GM13977 (cell line): ENCODE measurements at regions of chr4 and their contacts with region 1.

Region 1: GRCh38 chr4:77618383-77619122 is 12.9 kb downstream of the CXCL13 start:
- DNase-seq: peak; percentile 61
- CTCF ChIP-seq: peak; percentile 86

Region 2: DNA sequence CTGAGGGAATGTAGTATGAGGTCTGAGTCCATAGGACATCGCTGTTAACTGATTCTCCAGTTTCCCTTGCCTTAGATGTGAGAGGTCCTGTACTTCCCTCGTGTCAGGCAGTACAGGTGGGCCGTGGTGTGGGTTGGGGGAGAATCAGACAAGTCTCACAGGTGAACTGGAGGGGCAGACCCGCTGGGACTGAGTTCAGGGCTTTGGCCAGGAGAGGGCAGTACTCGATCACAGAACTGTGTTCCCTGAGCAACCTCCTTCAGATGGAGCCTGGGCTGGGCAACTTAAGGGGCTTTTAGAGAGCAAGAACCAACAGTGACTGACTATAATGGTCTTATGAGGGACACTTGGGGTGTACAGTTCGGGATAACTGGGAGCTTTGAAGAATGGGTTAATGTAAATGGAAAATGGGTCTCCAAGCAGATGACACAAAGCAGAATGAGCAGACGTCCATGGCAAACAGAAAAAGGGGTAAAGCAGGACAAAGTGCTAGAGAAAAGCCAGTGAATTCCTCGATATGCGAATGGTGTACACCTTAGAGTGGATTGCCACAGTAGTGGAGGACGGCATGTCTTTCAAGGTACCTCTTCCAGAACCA is 378.0 kb before region 1 on chr4:
- in situ Hi-C with region 1: loop called (anchors 25 kb)
- DNase-seq: peak; percentile 38
- CTCF ChIP-seq: peak; percentile 91

Region 3: GRCh38 chr4:77385124-77385969 is 233.2 kb before region 1 on chr4:
- in situ Hi-C with region 1: loop called (anchors 25 kb)
- DNase-seq: peak; percentile 38
- CTCF ChIP-seq: peak; percentile 90